ENCODE measurements at regions of chr4 and their contacts with region 1.

Region 1: DNA sequence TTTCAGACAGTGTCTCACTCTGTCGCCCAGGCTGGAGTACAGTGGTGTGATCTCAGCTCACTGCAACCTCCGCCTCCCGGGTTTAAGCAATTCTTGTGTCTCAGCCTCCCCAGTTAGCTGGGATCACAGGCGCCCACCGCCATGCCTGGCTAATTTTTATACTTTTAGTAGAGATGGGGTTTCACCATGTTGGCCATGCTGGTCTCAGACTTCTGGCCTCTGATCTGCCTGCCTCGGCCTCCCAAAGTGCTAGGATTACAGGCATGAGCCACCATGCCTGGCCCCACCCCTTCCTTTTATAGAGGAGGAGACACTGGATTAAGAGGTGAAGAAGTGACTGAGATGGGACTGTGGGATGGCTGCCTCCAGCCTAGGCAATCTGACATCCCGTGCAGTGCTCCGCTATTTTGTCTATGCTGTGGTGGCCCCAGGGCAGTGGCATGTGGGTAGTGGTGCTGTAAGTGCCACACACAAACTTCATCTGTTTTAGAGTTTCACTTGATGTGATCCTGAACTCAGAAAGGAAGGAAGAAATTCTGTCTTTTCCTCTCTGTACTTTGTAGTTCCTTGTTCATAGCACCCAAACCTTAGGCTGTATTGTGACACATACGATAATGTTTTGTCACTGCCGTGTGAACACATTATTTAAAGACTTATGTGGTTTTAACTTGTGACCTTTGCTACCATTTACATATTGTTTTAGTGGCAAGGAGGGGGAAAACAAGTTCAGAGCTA is 48.9 kb downstream of the FNIP2 start:
- DNase-seq: no peak
- ATAC-seq: peak; percentile 81
- H3K4me3 ChIP-seq: no peak overlapping the region
- H3K4me3 Mint-ChIP-seq: no peak overlapping the region
- H3K27ac ChIP-seq: no peak overlapping the region
- H3K27ac Mint-ChIP-seq: peak overlapping the region in 1 of 9 donors; percentile 72
- H3K4me1 ChIP-seq: peaks cover 0 to 7% of the 10 kb centered on the region in 2 donors
- H3K4me1 Mint-ChIP-seq: peaks cover 21 to 57% (median 26%) of the 10 kb centered on the region in 7 donors
- H3K27me3 ChIP-seq: no peaks in the 10 kb centered on the region
- H3K27me3 Mint-ChIP-seq: no peaks in the 10 kb centered on the region

Region 2: DNA sequence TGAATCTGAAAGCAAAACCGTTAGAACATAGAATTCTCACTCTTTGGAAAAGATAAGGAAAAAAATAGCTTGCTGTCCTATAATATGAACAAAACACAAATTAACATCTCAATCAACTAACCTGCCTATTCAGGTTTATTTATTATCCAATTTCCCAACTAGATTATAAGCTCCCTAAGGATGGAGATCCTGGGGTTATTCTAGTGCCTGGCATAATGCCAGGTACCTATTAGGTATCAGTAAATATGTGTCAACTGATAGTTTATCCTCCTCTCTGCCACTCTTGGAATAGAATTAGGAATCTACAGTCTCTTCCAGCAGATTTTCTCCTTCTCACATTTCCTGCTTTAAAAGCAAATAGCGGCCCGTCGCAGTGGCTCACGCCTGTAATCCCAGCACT is 126.0 kb before region 1 on chr4:
- CTCF ChIA-PET with region 1: no interaction called
- POLR2A ChIA-PET with region 1: no interaction called
- intact Hi-C with region 1: no loop called
- DNase-seq: no peak
- ATAC-seq: no peak
- H3K4me3 ChIP-seq: no peak overlapping the region
- H3K4me3 Mint-ChIP-seq: no peak overlapping the region
- H3K27ac ChIP-seq: no peak overlapping the region
- H3K27ac Mint-ChIP-seq: no peak overlapping the region
- H3K4me1 ChIP-seq: no peaks in the 10 kb centered on the region
- H3K4me1 Mint-ChIP-seq: no peaks in the 10 kb centered on the region
- H3K27me3 ChIP-seq: no peaks in the 10 kb centered on the region
- H3K27me3 Mint-ChIP-seq: no peaks in the 10 kb centered on the region

Region 3: GRCh38 chr4:158778156-158778711 is 39.5 kb before region 1 on chr4:
- CTCF ChIA-PET with region 1: no interaction called
- POLR2A ChIA-PET with region 1: no interaction called
- intact Hi-C with region 1: loop called in 1 of 2 experiments (anchors 2 kb)
- DNase-seq: peak in 4 of 9 donors; percentile 9 to 16 (median 12)
- ATAC-seq: peak; percentile 84
- H3K4me3 ChIP-seq: peak overlapping the region; percentile 26
- H3K4me3 Mint-ChIP-seq: peak overlapping the region; percentile 10 to 85 (median 73)
- H3K27ac ChIP-seq: no peak overlapping the region
- H3K27ac Mint-ChIP-seq: peak overlapping the region; percentile 8 to 85 (median 40)
- H3K4me1 ChIP-seq: peaks cover 0 to 5% of the 10 kb centered on the region in 2 donors
- H3K4me1 Mint-ChIP-seq: peaks cover 24 to 52% (median 51%) of the 10 kb centered on the region in 7 donors
- H3K27me3 ChIP-seq: no peaks in the 10 kb centered on the region
- H3K27me3 Mint-ChIP-seq: no peaks in the 10 kb centered on the region